ENCODE measurements at regions of chr17 and their contacts with region 1.

Region 1: DNA sequence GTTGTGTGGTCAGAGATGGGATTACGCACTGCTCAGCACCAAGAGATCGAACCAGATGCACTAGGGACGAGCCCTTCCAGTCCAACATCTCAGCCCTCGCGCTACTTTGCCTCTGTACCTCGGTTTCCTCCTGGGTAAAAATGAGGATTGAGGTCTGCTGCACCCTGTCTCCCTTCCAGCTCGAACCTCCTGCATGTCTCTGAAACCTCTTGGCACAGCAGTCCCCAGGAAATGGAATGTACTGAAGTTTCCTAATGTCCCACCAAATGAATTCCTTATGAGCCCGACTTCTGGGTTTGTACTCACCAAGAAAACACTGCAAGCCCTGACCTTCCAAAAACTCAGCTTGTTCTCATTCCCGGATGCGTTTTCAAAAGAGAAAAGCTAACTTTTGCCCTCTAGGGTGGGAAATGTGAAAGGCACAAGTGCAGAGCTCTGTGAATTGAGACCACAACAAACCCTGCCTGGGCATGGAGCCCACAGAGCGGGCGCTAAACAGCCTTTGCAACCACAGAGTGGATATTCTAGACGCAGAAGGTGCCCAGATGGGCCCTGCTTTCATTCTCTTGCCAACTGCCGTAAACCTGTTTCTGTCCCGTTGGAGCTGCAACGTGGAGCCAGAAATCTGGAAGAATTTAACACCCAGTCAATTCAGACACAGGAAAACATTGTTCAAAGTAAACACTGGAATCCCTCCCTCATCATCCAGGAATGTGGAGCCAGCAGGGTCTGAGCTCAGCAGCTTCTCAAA is 10.3 kb downstream of the CDRT4 start:
- DNase-seq: peak; percentile 54 to 85 (median 76)
- H3K4me3 ChIP-seq: peak overlapping the region in 20 of 59 donors; percentile 0 to 40 (median 15)
- H3K27ac ChIP-seq: peak overlapping the region; percentile 58 to 94 (median 89)
- H3K27me3 ChIP-seq: no peaks in the 10 kb centered on the region
- CTCF ChIP-seq: peak in 51 of 56 donors; percentile 17 to 72 (median 46)

Region 2: DNA sequence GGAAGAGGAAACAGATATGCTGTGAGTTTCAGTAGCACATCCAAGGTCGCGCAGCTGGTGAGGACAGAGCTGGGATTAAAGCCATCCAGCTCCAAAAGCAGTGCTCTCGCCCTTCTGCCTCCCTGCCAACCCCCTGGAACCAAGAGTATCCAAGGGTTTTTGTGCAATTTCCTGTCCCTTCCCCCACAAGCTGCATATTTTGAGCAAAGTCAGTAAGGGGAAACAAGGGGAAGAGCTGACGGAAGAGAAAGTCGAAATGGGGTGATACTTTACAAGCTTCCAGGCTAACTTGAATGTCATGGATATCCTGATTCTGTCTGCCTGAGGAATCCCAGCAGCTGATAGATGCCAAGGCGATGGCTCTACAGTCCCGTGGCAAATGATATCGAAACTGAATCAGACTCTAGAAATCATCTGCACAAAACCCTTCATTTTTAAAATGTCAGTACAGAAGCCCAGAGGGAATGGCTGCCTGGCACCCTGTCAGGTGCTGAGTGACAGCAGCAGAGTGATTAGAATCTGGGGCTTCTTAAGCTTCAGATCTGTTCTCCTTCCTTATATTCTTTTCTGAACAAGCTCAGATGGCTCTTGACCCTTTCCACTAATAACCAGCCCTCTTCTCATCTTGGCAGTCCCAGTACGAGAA is 72.9 kb before region 1 on chr17:
- intact Hi-C with region 1: loop called in 1 of 2 experiments (anchors 5 kb)
- DNase-seq: peak in 4 of 10 donors; percentile 23 to 57 (median 36)
- H3K4me3 ChIP-seq: peak overlapping the region in 58 of 59 donors; percentile 6 to 66 (median 44)
- H3K27ac ChIP-seq: peak overlapping the region in 51 of 59 donors; percentile 12 to 87 (median 73)
- H3K27me3 ChIP-seq: no peaks in the 10 kb centered on the region
- CTCF ChIP-seq: no peak

Region 3: DNA sequence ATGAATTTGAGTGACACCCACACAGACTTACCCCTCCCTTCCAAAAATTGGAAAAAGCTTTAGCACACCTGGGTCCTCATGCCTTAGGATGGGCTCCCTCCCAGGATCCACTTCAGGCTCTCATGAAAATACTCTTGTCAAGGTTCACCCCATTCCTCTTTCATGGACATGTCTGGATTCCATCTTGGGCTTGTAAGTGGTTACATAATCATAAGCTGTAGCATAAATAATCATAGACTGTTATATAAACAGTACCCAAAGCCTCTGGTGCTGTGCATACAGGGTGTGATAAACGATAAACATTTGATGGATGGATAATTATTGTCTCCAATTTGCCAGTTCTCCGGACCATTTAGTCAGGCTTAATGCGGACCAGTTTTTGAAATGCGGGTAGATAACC is 62.1 kb before region 1 on chr17:
- intact Hi-C with region 1: no loop called
- DNase-seq: no peak
- H3K4me3 ChIP-seq: no peak overlapping the region
- H3K27ac ChIP-seq: no peak overlapping the region
- H3K27me3 ChIP-seq: no peaks in the 10 kb centered on the region
- CTCF ChIP-seq: no peak

Region 4: DNA sequence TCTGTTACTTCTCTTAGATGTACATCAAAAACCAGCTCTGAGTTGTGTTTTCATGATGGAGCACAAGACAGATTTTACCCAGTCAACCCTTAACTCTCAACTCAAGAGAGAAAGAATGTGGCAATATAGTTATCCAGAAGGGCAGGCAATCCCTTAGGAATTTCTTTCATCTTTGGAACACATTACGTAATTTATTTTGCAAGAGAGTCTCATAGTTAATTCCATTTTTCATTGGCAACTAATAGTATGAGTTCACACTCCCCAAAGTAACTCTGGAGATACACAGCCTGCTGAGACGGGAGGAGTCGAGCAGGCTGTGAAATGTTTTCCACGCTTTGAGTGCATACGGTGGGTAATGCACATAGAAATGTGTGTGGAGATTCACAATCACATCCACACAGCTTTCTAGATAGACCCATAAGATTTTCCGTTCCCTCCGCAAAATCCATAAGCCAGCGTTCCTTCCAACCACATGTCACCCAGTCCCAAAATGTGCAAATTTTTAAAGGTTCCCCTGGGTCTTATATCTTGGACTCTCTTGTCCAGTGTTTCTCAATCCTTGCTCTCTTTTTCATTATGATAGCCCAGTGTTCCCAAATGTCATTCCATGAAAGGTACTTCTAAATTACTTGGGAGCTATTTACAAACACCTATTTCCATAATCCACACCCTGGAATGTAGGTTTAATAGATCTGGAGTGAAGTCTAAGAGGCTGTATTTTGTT is 18.6 kb after region 1 on chr17:
- intact Hi-C with region 1: no loop called
- DNase-seq: no peak
- H3K4me3 ChIP-seq: no peak overlapping the region
- H3K27ac ChIP-seq: no peak overlapping the region
- H3K27me3 ChIP-seq: no peaks in the 10 kb centered on the region
- CTCF ChIP-seq: no peak

Region 5: DNA sequence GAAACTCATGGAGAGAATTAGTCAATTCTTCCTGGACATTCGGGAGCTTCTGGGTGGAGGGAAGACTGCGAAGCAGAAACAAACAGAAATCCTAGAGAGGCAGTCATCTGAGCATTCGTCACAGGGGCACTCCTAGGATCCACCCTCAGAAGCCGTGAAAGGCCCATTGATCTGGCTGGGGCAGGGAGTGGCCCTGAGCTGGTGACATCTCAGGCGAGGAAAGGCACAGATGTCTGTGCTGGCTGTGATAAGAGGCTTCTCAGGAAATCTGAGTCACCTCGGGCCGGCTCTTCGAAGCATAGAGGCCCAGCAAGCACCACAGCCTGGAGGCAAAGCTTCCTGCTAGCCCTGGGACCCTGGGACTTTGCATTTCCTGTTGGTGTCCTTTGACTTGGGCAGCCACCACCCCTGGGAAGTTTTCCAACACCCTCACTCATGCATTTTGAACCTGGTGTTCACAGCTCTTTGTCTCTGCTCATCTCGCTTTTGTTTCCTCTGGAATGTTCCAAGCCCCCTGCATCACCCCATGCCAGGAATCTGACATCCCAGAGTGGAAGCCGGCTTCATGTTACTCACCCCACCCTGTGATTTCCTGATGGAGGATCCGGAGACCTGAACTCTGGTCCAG is 33.6 kb after region 1 on chr17:
- intact Hi-C with region 1: loop called in 1 of 2 experiments (anchors 5 kb)
- DNase-seq: peak; percentile 9 to 80 (median 72)
- H3K4me3 ChIP-seq: peak overlapping the region in 8 of 59 donors; percentile 0 to 35 (median 16)
- H3K27ac ChIP-seq: peak overlapping the region; percentile 18 to 94 (median 86)
- H3K27me3 ChIP-seq: no peaks in the 10 kb centered on the region
- CTCF ChIP-seq: peak in 5 of 56 donors; percentile 5 to 25 (median 15)

Region 6: DNA sequence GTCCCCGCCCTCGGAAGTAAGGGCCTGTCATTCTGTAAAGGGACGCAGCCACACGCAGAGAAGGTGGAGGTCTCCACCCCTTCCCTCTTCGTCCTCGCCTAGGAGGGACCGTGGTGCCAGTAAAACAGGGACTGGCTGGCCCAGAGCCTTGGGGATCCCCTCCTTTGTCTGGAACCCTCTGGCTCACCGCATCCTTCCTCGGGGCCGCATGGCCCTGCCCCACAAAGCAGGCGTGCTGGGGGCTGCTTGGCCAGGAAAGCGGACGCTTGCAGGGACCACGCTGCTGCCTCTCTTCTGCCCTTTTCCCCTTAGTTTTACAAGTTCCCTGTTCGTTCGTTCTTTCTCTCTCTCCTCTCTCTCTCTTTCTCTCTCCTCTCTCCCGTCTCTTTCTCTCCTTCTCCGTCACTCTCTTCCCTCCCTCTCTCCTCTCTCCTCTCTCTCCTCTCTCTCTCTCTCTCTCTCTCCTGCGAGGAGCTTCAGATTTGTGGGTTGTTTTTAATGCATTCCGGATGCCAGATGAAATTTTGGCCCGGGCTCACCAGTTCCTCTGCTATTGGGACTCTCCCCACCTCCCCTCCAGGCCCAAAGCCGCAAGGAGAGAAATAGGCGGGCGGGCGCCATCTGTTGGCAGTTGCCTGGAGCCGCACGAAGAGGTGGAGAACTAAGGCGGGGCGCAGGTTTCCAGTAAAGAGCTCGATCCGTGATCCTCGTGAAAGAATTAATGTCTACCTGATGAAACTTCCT is 45.4 kb after region 1 on chr17:
- intact Hi-C with region 1: loop called in 1 of 2 experiments (anchors 5 kb)
- DNase-seq: peak; percentile 74 to 89 (median 84)
- H3K4me3 ChIP-seq: peak overlapping the region in 55 of 59 donors; percentile 4 to 61 (median 39)
- H3K27ac ChIP-seq: peak overlapping the region in 56 of 59 donors; percentile 2 to 89 (median 77)
- H3K27me3 ChIP-seq: no peaks in the 10 kb centered on the region
- CTCF ChIP-seq: peak; percentile 48 to 94 (median 86)